Activated naive CD4-positive, alpha-beta T cell treated with anti-CD3 and anti-CD28 coated beads for 36 hours (primary cell): ENCODE measurements at regions of chr18 and their contacts with region 1.

Region 1: GRCh38 chr18:11947214-11948191 is 33.8 kb upstream of the IMPA2 start:
- DNase-seq: peak; percentile 80
- H3K4me3 Mint-ChIP-seq: peak overlapping the region; percentile 83
- H3K27ac Mint-ChIP-seq: peak overlapping the region; percentile 81
- H3K4me1 Mint-ChIP-seq: peaks cover 4% of the 10 kb centered on the region
- H3K27me3 Mint-ChIP-seq: no peaks in the 10 kb centered on the region

Region 2: DNA sequence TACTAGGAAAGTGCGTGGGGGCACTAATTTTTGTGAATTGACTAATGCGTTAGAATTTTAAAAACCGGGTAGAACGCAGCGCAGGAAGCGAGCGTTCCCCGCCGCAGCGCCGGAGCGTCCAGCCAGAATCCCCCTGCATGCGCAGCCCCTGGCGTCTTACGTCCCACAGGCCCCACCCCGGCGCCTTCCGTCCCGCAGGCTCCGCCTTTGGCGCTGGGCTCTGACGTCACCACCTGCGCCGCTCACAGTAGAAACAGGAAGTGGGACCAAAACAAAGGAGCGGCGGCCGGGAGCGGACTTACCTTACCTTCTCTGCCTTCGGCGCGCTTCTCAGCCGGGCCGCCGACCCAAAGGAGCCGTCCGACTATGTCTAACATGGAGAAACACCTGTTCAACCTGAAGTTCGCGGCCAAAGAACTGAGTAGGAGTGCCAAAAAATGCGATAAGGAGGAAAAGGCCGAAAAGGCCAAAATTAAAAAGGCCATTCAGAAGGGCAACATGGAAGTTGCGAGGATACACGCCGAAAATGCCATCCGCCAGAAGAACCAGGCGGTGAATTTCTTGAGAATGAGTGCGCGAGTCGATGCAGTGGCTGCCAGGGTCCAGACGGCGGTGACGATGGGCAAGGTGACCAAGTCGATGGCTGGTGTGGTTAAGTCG is 96.2 kb before region 1 on chr18 and contains the start of gene CHMP1B:
- CTCF ChIA-PET with region 1: no interaction called
- intact Hi-C with region 1: loop called (anchors 1 kb)
- DNase-seq: peak; percentile 98
- H3K4me3 Mint-ChIP-seq: peak within 1 kb of the TSS; percentile 100
- H3K27ac Mint-ChIP-seq: peak within 1 kb of the TSS; percentile 100
- H3K4me1 Mint-ChIP-seq: peaks cover 31% of the 10 kb centered on the region
- H3K27me3 Mint-ChIP-seq: no peaks in the 10 kb centered on the region
- total RNA-seq, gene CHMP1B: 23.2 TPM

Region 3: DNA sequence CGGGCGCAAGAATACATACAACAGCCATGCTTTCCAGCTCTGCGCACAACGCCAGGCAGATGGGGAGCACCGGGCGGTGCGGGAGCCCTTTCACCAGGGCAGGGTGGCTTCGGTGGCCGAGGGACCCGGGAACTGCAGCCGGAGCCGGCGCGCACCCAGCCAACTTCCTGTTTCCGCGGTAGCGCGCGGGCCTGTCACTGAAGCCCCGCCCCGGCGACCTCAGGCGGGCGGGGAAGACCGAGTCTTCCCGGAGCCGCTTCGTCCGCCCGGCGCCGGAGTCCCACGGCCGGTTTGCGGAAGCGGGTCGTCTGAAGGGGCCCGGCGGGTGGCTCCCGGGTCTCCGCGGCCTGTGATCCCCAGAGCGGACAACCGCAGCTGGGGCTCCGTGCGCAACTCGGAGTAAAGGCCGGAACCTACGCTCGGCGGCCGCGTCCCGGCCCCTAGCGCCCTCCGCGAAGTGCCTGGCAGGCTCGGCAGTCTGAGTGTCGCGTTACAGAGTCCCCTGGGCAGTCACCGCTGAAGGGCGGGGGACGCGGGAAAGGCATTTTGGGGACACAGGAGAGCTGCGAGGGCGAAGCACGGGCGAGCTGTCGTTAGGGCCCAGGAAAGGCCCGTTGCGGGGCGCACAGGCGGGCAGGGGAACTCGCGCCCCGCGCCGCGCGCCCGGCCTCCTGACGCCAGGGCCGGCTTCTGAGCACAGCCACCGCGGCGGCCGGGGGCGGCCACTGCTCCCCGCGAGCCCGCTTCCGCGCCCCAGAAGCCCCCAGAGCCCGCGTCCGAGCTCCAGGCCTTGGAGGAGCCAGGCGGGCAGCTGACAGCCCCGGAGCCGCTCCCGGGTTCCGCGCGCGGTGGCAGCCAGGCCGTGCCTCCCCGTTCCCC is 39.1 kb before region 1 on chr18 and contains the start of gene MPPE1:
- CTCF ChIA-PET with region 1: no interaction called
- intact Hi-C with region 1: loop called (anchors 1 kb)
- DNase-seq: peak; percentile 89
- H3K4me3 Mint-ChIP-seq: peak within 1 kb of the TSS; percentile 89
- H3K27ac Mint-ChIP-seq: peak within 1 kb of the TSS; percentile 93
- H3K4me1 Mint-ChIP-seq: peaks cover 24% of the 10 kb centered on the region
- H3K27me3 Mint-ChIP-seq: no peaks in the 10 kb centered on the region
- total RNA-seq, gene MPPE1: 30.4 to 34.3 TPM

Region 4: GRCh38 chr18:11995445-11996189 is 48.1 kb after region 1 on chr18:
- CTCF ChIA-PET with region 1: interaction called, 234 read pairs
- intact Hi-C with region 1: no loop called
- DNase-seq: peak; percentile 74
- H3K4me3 Mint-ChIP-seq: no peak overlapping the region
- H3K27ac Mint-ChIP-seq: no peak overlapping the region
- H3K4me1 Mint-ChIP-seq: peaks cover 8% of the 10 kb centered on the region
- H3K27me3 Mint-ChIP-seq: no peaks in the 10 kb centered on the region

Region 5: DNA sequence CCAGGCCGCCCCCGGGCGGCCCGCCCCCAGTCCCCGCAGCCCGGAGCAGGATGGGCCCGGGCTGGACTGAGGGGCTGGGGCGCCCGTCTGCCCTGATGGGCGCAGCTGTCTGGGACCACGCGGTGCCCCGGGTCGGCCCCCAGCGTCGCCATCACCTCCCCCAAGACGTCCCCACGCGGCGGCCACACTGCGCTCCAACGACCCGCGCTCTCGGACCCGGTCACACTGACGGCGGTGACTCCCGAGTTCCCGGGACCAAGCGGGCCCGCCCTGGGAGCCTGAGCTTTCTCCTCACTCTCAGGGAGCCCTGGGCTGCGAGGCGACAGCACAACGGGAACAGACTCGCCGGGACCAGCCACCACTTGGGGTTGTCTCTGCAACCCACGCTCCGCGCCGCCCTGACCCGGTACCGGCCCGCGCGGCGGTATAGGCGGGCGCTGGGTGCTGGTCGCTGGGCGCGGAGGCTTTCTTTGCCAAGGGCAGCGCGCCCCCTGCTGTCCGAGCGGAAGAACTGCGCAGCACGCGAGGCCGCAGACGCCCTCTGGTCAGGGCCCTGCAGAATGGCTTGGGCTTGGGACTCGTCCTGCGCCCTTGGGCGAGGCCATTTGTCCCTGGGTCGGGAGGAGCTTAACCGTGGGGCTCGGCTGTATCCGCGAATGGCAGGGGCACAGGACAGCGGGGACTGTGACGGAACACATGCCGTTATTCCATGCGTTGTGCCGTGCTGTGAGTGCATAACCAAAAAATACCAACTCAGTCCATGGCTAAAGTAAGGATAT is 91.3 kb after region 1 on chr18:
- CTCF ChIA-PET with region 1: interaction called, 11 read pairs
- intact Hi-C with region 1: no loop called
- DNase-seq: peak; percentile 76
- H3K4me3 Mint-ChIP-seq: peak overlapping the region; percentile 48
- H3K27ac Mint-ChIP-seq: no peak overlapping the region
- H3K4me1 Mint-ChIP-seq: peaks cover 10% of the 10 kb centered on the region
- H3K27me3 Mint-ChIP-seq: peaks cover 5% of the 10 kb centered on the region